B cell (primary cell): ENCODE measurements at regions of chr10 and their contacts with region 1.

Region 1: DNA sequence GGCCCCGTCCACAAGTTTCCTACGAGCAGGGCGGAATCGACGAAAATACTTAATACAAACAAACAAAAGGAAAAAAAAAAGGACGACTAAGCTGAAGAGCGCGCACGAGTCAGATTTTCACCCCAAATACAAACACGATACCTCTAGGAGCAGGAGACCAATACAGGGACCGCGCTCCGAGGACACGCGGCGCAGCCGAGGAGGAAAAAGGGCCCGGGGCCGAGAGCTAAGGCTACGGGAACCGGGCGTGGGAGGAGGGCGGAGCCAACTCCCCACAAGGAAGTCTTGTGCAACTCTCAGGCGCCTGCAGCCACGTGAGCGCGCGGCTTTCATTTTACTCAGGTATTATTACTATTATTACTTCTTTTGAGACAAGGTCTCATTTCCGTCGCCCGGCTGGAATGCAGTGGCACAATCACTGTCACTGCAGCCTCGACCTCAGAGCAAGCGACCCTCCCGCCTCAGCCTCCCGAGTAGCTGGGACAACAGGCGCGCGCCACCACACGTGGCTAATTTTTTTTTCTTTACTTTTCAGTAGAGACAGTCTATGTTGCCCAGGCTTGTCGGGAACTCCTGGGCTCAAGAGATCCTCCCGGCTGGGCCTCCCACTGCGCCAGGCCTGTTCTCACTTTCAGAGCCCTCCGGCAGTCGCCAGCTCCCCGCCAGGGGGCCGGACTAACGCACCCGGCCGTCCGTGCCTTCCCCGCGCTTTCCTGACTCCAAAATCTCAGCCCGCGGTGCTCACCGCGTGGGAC is 1.2 kb downstream of the HNRNPF start:
- DNase-seq: peak; percentile 92
- ATAC-seq: peak; percentile 44
- H3K4me3 ChIP-seq: peak overlapping the region; percentile 43 to 92 (median 83)
- H3K4me3 Mint-ChIP-seq: peak overlapping the region; percentile 98
- H3K27ac ChIP-seq: peak overlapping the region; percentile 100
- H3K27ac Mint-ChIP-seq: peak overlapping the region; percentile 98
- H3K4me1 ChIP-seq: peaks cover 38 to 55% of the 10 kb centered on the region in 2 donors
- H3K4me1 Mint-ChIP-seq: peaks cover 37% of the 10 kb centered on the region
- H3K27me3 ChIP-seq: no peaks in the 10 kb centered on the region
- H3K27me3 Mint-ChIP-seq: no peaks in the 10 kb centered on the region
- CTCF ChIP-seq: peak; percentile 70

Region 2: DNA sequence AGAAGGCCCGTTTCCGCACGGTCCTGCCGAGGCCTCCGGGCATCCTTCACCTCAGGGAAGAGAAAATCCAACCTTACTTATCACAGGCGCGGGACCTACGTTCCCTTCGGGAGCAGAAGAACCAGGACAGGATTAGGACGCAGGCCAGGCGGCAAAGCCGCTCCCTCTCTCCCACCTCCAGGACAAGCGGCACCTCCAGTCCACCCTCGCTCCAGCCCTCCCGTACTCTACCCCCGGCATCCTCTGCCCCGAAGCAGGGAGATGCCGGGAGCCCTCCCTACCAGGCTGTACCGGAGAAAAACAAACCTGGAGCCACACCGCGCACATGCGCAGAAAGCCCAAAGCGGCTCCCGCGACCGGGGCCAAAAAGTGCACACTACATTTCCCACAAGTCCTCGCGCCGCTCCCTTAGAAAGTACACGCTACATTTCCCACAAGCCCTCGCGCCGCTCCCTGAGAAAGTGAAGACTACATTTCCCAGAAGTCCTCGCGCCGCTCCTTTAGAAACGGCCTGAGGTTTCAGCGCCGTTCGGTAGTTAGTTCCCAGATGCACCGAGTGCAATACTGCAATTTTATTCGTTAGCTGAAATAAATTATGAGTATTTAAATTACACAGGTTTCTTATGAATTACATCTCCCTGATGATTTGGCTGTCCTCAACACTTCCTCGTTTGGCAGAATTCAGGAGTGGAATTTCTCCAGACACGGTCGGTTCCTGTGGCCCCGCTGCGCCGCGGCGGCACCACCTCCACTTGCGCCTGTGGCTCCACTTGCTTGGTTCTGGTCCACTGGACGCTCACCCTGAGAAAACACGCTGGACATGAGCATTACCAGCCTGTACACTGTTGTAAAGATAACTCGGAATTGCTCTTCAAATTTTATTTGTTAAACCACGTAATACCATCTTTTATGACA is 855.0 kb before region 1 on chr10:
- CTCF ChIA-PET with region 1: no interaction called
- POLR2A ChIA-PET with region 1: no interaction called
- intact Hi-C with region 1: loop called (anchors 5 kb)
- DNase-seq: peak; percentile 95
- ATAC-seq: peak; percentile 96
- H3K4me3 ChIP-seq: peak overlapping the region; percentile 46 to 98 (median 95)
- H3K4me3 Mint-ChIP-seq: peak overlapping the region; percentile 99
- H3K27ac ChIP-seq: peak overlapping the region; percentile 74 to 79
- H3K27ac Mint-ChIP-seq: peak overlapping the region; percentile 98
- H3K4me1 ChIP-seq: peaks cover 17 to 18% of the 10 kb centered on the region in 2 donors
- H3K4me1 Mint-ChIP-seq: peaks cover 34% of the 10 kb centered on the region
- H3K27me3 ChIP-seq: no peaks in the 10 kb centered on the region
- H3K27me3 Mint-ChIP-seq: no peaks in the 10 kb centered on the region
- CTCF ChIP-seq: no peak

Region 3: GRCh38 chr10:42782446-42783180 is 625.1 kb before region 1 on chr10 and contains the start of gene BMS1:
- CTCF ChIA-PET with region 1: no interaction called
- POLR2A ChIA-PET with region 1: no interaction called
- intact Hi-C with region 1: loop called (anchors 2 kb)
- DNase-seq: peak; percentile 92
- ATAC-seq: peak; percentile 86
- H3K4me3 ChIP-seq: peak within 1 kb of the TSS; percentile 70 to 93 (median 85)
- H3K4me3 Mint-ChIP-seq: peak within 1 kb of the TSS; percentile 96
- H3K27ac ChIP-seq: peak within 1 kb of the TSS; percentile 77 to 81
- H3K27ac Mint-ChIP-seq: peak within 1 kb of the TSS; percentile 89
- H3K4me1 ChIP-seq: peaks cover 12 to 13% of the 10 kb centered on the region in 2 donors
- H3K4me1 Mint-ChIP-seq: peaks cover 24% of the 10 kb centered on the region
- H3K27me3 ChIP-seq: no peaks in the 10 kb centered on the region
- H3K27me3 Mint-ChIP-seq: peaks cover 6% of the 10 kb centered on the region
- CTCF ChIP-seq: no peak
- total RNA-seq, gene BMS1: 17.1 and 17.5 TPM in 2 replicates

Region 4: DNA sequence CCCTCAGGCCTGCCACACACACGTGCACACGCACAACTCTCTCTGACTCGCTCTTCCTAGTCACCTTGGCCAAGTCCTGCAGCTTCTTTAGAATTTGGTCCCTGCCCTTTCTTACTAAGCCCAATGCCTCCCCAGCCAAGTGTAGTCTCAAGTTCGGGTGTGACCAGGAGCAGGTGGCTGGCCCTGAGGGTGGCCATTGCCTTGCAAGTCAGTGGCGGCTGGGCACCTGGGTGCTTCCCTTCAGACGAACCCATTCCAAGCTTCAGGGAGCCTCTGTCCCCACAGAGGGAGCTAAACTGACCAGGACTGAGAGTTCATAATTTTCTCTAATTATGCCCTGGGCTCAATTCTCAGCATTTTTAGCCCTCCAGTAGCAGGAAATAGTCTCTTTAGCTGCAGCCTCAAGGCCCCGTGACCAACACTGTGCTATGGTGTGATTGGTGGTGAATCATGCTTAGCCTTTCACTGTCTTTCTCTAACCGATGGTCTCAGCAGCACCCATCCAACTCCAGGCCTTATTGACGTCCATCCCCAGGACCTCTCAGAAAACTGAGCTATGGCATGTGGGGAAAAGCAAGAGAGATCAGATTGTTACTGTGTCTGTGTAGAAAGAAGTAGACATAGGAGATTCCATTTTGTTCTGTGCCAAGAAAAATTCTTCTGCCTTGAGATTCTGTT is 71.0 kb before region 1 on chr10:
- CTCF ChIA-PET with region 1: no interaction called
- POLR2A ChIA-PET with region 1: no interaction called
- intact Hi-C with region 1: no loop called
- DNase-seq: no peak
- ATAC-seq: no peak
- H3K4me3 ChIP-seq: no peak overlapping the region
- H3K4me3 Mint-ChIP-seq: no peak overlapping the region
- H3K27ac ChIP-seq: no peak overlapping the region
- H3K27ac Mint-ChIP-seq: no peak overlapping the region
- H3K4me1 ChIP-seq: peaks cover 0 to 3% of the 10 kb centered on the region in 2 donors
- H3K4me1 Mint-ChIP-seq: peaks cover 3% of the 10 kb centered on the region
- H3K27me3 ChIP-seq: peaks cover 0 to 5% (median 0%) of the 10 kb centered on the region in 4 experiments
- H3K27me3 Mint-ChIP-seq: peaks cover 37% of the 10 kb centered on the region
- CTCF ChIP-seq: no peak

Region 5: DNA sequence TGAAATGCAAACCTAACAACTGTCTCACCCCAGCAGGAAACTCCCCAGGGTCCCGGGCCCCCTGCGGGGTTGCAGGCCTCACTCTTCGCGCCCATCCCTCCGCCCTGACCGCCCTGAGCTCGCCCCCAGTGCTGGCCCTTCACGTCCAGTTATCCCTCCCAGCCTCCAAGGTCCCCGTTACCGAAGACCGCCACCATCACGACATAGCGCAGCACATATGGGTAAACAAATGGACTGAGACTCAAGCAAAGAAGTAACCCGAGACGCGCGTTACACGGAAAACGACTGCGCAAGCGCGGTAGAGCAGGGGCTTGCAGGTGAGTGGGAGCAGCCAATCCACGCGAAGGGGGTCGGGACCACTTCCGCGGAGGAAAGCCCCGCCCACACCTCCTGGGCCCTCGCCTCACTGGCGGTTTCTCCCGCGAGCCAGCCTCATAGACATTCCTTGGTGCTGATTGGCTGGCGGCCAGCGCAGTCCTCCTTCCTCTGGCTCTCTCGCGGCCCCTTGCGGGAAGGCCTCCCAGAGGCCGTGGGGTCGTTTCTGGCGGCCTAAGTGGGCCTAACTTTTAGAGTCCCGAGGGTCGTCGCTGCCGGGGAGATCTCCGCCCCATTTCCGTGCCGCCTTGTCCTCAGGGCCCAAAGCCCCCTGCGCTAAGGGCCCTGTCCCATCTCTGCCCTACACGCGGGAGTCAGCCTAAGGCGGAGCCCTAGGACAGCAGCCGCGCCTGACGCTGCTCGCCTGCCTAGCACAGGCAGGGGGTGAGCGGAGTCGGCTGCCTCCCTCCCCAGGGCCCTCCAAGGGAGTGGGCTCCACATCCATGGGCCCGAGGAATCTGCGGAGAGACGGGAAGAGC is 45.5 kb before region 1 on chr10:
- CTCF ChIA-PET with region 1: interaction called, 3 read pairs
- POLR2A ChIA-PET with region 1: interaction called, 6 read pairs
- intact Hi-C with region 1: loop called (anchors 1 kb)
- DNase-seq: peak; percentile 95
- ATAC-seq: peak; percentile 97
- H3K4me3 ChIP-seq: peak overlapping the region; percentile 66 to 91 (median 74)
- H3K4me3 Mint-ChIP-seq: peak overlapping the region; percentile 97
- H3K27ac ChIP-seq: peak overlapping the region; percentile 78 to 86
- H3K27ac Mint-ChIP-seq: peak overlapping the region; percentile 94
- H3K4me1 ChIP-seq: peaks cover 8 to 19% of the 10 kb centered on the region in 2 donors
- H3K4me1 Mint-ChIP-seq: peaks cover 25% of the 10 kb centered on the region
- H3K27me3 ChIP-seq: no peaks in the 10 kb centered on the region
- H3K27me3 Mint-ChIP-seq: no peaks in the 10 kb centered on the region
- CTCF ChIP-seq: peak; percentile 36

Region 6: GRCh38 chr10:43396928-43397624 is 10.7 kb before region 1 on chr10:
- CTCF ChIA-PET with region 1: interaction called, 5 read pairs
- POLR2A ChIA-PET with region 1: interaction called, 21 read pairs
- intact Hi-C with region 1: loop called (anchors 1 kb)
- DNase-seq: peak; percentile 90
- ATAC-seq: peak; percentile 81
- H3K4me3 ChIP-seq: peak overlapping the region; percentile 46 to 75 (median 61)
- H3K4me3 Mint-ChIP-seq: peak overlapping the region; percentile 95
- H3K27ac ChIP-seq: peak overlapping the region; percentile 85 to 97
- H3K27ac Mint-ChIP-seq: peak overlapping the region; percentile 96
- H3K4me1 ChIP-seq: peaks cover 68 to 79% of the 10 kb centered on the region in 2 donors
- H3K4me1 Mint-ChIP-seq: peaks cover 73% of the 10 kb centered on the region
- H3K27me3 ChIP-seq: no peaks in the 10 kb centered on the region
- H3K27me3 Mint-ChIP-seq: no peaks in the 10 kb centered on the region
- CTCF ChIP-seq: no peak

Region 7: GRCh38 chr10:43427166-43427825 is 19.5 kb after region 1 on chr10:
- CTCF ChIA-PET with region 1: interaction called, 10 read pairs
- POLR2A ChIA-PET with region 1: interaction called, 8 read pairs
- intact Hi-C with region 1: no loop called
- DNase-seq: peak; percentile 75
- ATAC-seq: peak; percentile 82
- H3K4me3 ChIP-seq: peak overlapping the region in 1 of 5 experiments; percentile 15
- H3K4me3 Mint-ChIP-seq: peak overlapping the region; percentile 75
- H3K27ac ChIP-seq: peak overlapping the region; percentile 19 to 62
- H3K27ac Mint-ChIP-seq: peak overlapping the region; percentile 87
- H3K4me1 ChIP-seq: peaks cover 17 to 19% of the 10 kb centered on the region in 2 donors
- H3K4me1 Mint-ChIP-seq: peaks cover 10% of the 10 kb centered on the region
- H3K27me3 ChIP-seq: no peaks in the 10 kb centered on the region
- H3K27me3 Mint-ChIP-seq: no peaks in the 10 kb centered on the region
- CTCF ChIP-seq: no peak

Region 8: GRCh38 chr10:43453266-43453831 is 45.6 kb after region 1 on chr10:
- CTCF ChIA-PET with region 1: interaction called, 9 read pairs
- POLR2A ChIA-PET with region 1: interaction called, 15 read pairs
- intact Hi-C with region 1: no loop called
- DNase-seq: no peak
- ATAC-seq: no peak
- H3K4me3 ChIP-seq: no peak overlapping the region
- H3K4me3 Mint-ChIP-seq: peak overlapping the region; percentile 83
- H3K27ac ChIP-seq: peak overlapping the region; percentile 85 to 90
- H3K27ac Mint-ChIP-seq: peak overlapping the region; percentile 98
- H3K4me1 ChIP-seq: peaks cover 47 to 71% of the 10 kb centered on the region in 2 donors
- H3K4me1 Mint-ChIP-seq: peaks cover 48% of the 10 kb centered on the region
- H3K27me3 ChIP-seq: no peaks in the 10 kb centered on the region
- H3K27me3 Mint-ChIP-seq: no peaks in the 10 kb centered on the region
- CTCF ChIP-seq: no peak